Activated naive CD4-positive, alpha-beta T cell treated with anti-CD3 and anti-CD28 coated beads for 36 hours (primary cell): ENCODE measurements at regions of chr1 and their contacts with region 1.

Region 1: DNA sequence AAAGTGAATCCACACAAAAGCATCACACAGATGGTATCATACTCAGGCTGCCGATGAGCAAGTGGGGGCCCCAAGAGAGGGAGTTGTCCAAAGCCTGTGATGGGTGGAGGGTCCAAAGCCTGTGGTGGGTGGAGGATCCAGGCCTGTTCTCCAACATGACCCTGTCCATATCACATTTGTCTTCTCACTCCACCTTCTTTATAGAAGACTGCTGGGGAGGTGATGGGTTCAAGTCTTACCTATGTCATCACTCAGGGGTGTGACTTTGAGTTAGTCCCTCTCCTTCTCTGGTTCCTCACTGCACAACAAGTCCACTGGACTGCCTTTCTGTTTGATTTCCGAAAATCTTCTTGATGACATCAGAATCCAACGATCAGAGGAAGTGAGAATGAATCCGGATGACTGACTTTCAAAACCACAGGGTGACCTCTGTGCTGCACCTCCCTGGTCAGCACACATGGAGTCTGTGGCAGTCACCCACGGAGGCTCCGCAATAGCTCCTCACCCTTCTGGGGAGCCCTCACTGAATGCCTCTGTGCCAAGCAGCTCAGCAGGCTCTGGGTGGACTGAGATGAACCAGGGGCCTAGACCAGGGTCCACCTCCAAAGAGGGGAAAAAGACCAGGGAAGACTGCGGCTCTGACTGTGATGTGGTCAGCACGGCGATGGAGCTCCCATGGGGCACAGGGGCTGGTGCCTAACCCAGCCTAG is 166.8 kb downstream of the HIVEP3 start:
- DNase-seq: no peak
- H3K4me3 Mint-ChIP-seq: no peak overlapping the region
- H3K27ac Mint-ChIP-seq: peak overlapping the region; percentile 98
- H3K4me1 Mint-ChIP-seq: peaks cover 75% of the 10 kb centered on the region
- H3K27me3 Mint-ChIP-seq: no peaks in the 10 kb centered on the region

Region 2: DNA sequence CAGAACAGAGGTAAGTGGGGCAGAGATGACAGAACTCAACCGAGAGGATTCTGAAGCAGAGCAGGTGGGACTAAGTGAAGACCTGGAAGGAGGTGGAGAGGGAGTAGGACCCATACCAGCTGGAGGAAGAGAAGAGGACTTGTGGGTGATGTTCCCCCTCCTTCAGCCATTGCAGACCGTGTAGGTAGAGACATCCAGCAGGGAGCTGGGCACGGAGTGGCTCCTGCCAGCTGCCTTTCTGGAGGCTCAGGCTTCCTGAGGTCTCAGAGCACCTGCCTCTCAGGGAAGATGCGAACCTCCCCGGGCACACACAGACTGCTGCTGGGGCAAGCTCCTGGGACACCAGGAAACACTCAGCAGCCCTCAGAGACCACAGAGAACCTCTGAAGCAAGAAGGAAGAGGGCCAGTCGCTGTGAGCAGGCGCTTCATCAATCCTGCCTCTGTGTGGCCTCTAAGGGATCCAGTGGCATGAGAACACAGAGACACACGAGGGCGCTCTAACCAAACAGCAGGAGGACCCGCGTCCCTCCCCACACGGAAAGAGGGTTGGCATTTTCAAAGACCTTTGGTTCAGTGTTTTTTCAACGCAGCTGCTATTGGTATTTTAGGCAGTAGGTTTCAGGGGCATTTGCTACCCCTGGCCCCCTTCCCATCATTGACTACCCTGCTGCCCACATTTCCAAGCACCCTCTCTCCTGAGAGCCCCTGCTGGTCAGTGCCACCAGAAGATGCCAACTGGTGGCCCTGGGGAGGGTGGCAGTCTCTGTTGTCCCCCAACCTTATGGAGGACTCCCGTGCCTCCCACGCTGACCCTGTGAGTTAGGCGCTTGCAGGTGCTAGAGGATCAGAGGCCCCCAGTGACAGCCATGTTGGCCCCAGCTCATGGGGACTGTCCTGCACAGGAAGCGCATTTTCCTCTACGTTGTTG is 177.9 kb before region 1 on chr1:
- CTCF ChIA-PET with region 1: no interaction called
- intact Hi-C with region 1: loop called (anchors 10 kb)
- DNase-seq: peak; percentile 92
- H3K4me3 Mint-ChIP-seq: no peak overlapping the region
- H3K27ac Mint-ChIP-seq: peak overlapping the region; percentile 20
- H3K4me1 Mint-ChIP-seq: peaks cover 42% of the 10 kb centered on the region
- H3K27me3 Mint-ChIP-seq: no peaks in the 10 kb centered on the region

Region 3: GRCh38 chr1:41728403-41729202 is 23.4 kb before region 1 on chr1:
- CTCF ChIA-PET with region 1: interaction called, 4 read pairs
- intact Hi-C with region 1: loop called (anchors 1 kb)
- DNase-seq: peak; percentile 78
- H3K4me3 Mint-ChIP-seq: no peak overlapping the region
- H3K27ac Mint-ChIP-seq: no peak overlapping the region
- H3K4me1 Mint-ChIP-seq: peaks cover 38% of the 10 kb centered on the region
- H3K27me3 Mint-ChIP-seq: no peaks in the 10 kb centered on the region

Region 4: GRCh38 chr1:41795205-41795762 is 43.3 kb after region 1 on chr1:
- CTCF ChIA-PET with region 1: interaction called, 3 read pairs
- intact Hi-C with region 1: loop called (anchors 1 kb)
- DNase-seq: no peak
- H3K4me3 Mint-ChIP-seq: no peak overlapping the region
- H3K27ac Mint-ChIP-seq: no peak overlapping the region
- H3K4me1 Mint-ChIP-seq: peaks cover 54% of the 10 kb centered on the region
- H3K27me3 Mint-ChIP-seq: no peaks in the 10 kb centered on the region

Region 5: GRCh38 chr1:41862384-41863174 is 110.6 kb after region 1 on chr1:
- CTCF ChIA-PET with region 1: no interaction called
- intact Hi-C with region 1: loop called (anchors 2 kb)
- DNase-seq: peak; percentile 85
- H3K4me3 Mint-ChIP-seq: peak overlapping the region; percentile 41
- H3K27ac Mint-ChIP-seq: peak overlapping the region; percentile 88
- H3K4me1 Mint-ChIP-seq: peaks cover 44% of the 10 kb centered on the region
- H3K27me3 Mint-ChIP-seq: no peaks in the 10 kb centered on the region